ENCODE measurements at regions of chr1 and their contacts with region 1.

Region 1: GRCh38 chr1:10299151-10299550 is 88.8 kb downstream of the KIF1B start:
- DNase-seq: no peak
- H3K4me3 ChIP-seq: peak overlapping the region in 21 of 59 donors; percentile 0 to 41 (median 19)
- H3K27ac ChIP-seq: peak overlapping the region in 56 of 59 donors; percentile 9 to 96 (median 88)
- H3K27me3 ChIP-seq: no peaks in the 10 kb centered on the region
- CTCF ChIP-seq: no peak

Region 2: DNA sequence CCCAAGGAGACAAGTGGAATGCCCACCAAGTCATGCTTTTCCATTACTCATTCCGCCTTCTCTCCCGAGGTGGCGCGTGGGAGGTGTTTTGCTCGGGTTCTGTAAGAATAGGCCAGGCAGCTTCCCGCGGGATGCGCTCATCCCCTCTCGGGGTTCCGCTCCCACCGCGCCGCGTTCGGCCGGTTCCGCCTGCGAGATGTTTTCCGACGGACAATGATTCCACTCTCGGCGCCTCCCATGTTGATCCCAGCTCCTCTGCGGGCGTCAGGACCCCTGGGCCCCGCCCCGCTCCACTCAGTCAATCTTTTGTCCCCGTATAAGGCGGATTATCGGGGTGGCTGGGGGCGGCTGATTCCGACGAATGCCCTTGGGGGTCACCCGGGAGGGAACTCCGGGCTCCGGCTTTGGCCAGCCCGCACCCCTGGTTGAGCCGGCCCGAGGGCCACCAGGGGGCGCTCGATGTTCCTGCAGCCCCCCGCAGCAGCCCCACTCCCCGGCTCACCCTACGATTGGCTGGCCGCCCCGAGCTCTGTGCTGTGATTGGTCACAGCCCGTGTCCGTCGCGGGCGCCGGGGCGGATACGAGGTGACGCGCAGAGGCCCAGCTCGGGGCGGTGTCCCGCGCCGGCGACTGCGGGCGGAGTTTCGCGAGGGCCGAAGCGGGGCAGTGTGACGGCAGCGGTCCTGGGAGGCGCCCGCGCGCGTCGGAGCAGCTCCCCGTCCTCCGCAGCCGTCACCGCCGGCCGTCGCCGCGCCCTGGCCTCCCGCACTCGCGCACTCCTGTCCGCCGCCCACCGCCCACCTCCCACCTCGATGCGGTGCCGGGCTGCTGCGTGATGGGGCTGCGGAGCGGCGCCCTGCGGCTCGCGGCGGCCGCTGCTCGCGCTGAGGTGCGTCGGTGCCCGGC is 89.0 kb before region 1 on chr1 and contains the start of gene KIF1B:
- intact Hi-C with region 1: loop called (anchors 2 kb)
- DNase-seq: peak; percentile 96 to 100 (median 98)
- H3K4me3 ChIP-seq: peak within 1 kb of the TSS; percentile 52 to 100 (median 87)
- H3K27ac ChIP-seq: peak within 1 kb of the TSS; percentile 88 to 100 (median 99)
- H3K27me3 ChIP-seq: no peaks in the 10 kb centered on the region
- CTCF ChIP-seq: peak; percentile 93 to 100 (median 98)
- total RNA-seq, gene KIF1B: 238 to 416 (median 324) TPM